PC-9 (cell line): ENCODE measurements at regions of chr4 and their contacts with region 1.

Region 1: GRCh38 chr4:143335979-143336780 is 496 bp upstream of the GAB1 start:
- DNase-seq: peak; percentile 62 to 90
- H3K4me3 ChIP-seq: peak overlapping the region; percentile 88
- H3K27ac ChIP-seq: peak overlapping the region; percentile 78
- H3K4me1 ChIP-seq: no peaks in the 10 kb centered on the region
- H3K27me3 ChIP-seq: no peaks in the 10 kb centered on the region
- CTCF ChIP-seq: no peak

Region 2: GRCh38 chr4:143294310-143294709 is 41.9 kb before region 1 on chr4:
- CTCF ChIA-PET with region 1: no interaction called
- POLR2A ChIA-PET with region 1: no interaction called
- intact Hi-C with region 1: no loop called
- DNase-seq: no peak
- H3K4me3 ChIP-seq: no peak overlapping the region
- H3K27ac ChIP-seq: no peak overlapping the region
- H3K4me1 ChIP-seq: peaks cover 7% of the 10 kb centered on the region; the same call in 1 of the 2 replicates
- H3K27me3 ChIP-seq: no peaks in the 10 kb centered on the region
- CTCF ChIP-seq: no peak

Region 3: GRCh38 chr4:143346206-143346605 is 10.0 kb after region 1 on chr4:
- CTCF ChIA-PET with region 1: no interaction called
- POLR2A ChIA-PET with region 1: interaction called, 21 read pairs
- intact Hi-C with region 1: loop called (anchors 1 kb)
- DNase-seq: peak; percentile 78 to 90
- H3K4me3 ChIP-seq: peak overlapping the region; percentile 44; the same call in 1 of the 2 replicates
- H3K27ac ChIP-seq: no peak overlapping the region
- H3K4me1 ChIP-seq: peaks cover 25% of the 10 kb centered on the region
- H3K27me3 ChIP-seq: no peaks in the 10 kb centered on the region
- CTCF ChIP-seq: no peak

Region 4: GRCh38 chr4:143358923-143359643 is 22.9 kb after region 1 on chr4:
- CTCF ChIA-PET with region 1: no interaction called
- POLR2A ChIA-PET with region 1: interaction called, 3 read pairs
- intact Hi-C with region 1: loop called (anchors 1 kb)
- DNase-seq: peak; percentile 56 to 88
- H3K4me3 ChIP-seq: no peak overlapping the region
- H3K27ac ChIP-seq: peak overlapping the region; percentile 87
- H3K4me1 ChIP-seq: peaks cover 54% of the 10 kb centered on the region
- H3K27me3 ChIP-seq: no peaks in the 10 kb centered on the region
- CTCF ChIP-seq: no peak

Region 5: GRCh38 chr4:143399113-143399949 is 63.2 kb after region 1 on chr4:
- CTCF ChIA-PET with region 1: interaction called, 3 read pairs
- POLR2A ChIA-PET with region 1: no interaction called
- intact Hi-C with region 1: loop called (anchors 1 kb)
- DNase-seq: no peak
- H3K4me3 ChIP-seq: no peak overlapping the region
- H3K27ac ChIP-seq: no peak overlapping the region
- H3K4me1 ChIP-seq: no peaks in the 10 kb centered on the region
- H3K27me3 ChIP-seq: no peaks in the 10 kb centered on the region
- CTCF ChIP-seq: peak; percentile 68

Region 6: DNA sequence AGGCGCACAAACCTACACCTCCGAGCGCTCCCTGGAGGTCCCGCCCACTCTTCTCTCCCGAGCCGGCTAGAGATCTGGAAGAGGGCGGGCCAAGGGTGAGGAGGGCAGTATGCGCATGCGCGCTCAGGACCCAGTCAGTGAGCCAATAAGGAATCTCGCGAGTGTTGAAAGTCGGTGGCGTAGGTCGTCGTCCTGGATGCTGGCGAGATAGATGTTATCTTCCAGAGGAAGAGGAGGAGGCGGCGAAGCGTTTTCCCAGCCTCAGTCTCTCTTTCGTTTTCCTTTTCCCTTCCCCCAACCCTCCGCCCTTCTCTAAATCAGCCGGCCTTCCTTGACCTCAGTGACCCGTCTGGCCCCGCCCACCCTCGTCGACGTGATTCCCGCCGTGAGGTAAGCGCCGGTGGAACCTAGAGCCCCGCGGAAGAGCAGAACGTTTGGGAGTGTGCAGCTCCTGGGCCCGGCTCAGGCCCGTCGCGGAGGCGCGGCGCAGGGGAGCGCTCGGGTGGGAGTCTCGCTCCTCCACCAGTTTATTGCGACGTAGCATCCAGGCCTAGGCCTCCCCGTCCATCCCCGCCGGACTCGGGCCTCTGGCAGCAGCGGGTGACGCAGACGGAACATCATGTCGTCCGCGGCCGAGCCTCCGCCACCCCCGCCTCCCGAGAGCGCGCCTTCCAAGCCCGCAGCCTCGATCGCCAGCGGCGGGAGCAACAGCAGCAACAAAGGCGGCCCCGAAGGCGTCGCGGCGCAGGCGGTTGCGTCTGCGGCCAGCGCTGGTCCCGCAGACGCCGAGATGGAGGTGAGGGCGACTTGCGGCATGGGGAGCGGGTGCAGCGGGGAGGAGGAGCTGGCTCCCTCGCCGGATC is 177.4 kb after region 1 on chr4 and contains the start of gene SMARCA5:
- CTCF ChIA-PET with region 1: no interaction called
- POLR2A ChIA-PET with region 1: no interaction called
- intact Hi-C with region 1: loop called (anchors 1 kb)
- DNase-seq: peak; percentile 90 to 96
- H3K4me3 ChIP-seq: peak within 1 kb of the TSS; percentile 93
- H3K27ac ChIP-seq: peak within 1 kb of the TSS; percentile 81
- H3K4me1 ChIP-seq: peaks cover 13% of the 10 kb centered on the region
- H3K27me3 ChIP-seq: no peaks in the 10 kb centered on the region
- CTCF ChIP-seq: no peak
- total RNA-seq, gene SMARCA5: 34.4 and 40.5 TPM in 2 replicates